ENCODE measurements at regions of chr21 and their contacts with region 1.

Region 1: GRCh38 chr21:31580866-31581276 is 78.6 kb upstream of the SOD1 start:
- DNase-seq: peak; percentile 80
- H3K4me3 Mint-ChIP-seq: no peak overlapping the region
- H3K27ac Mint-ChIP-seq: no peak overlapping the region
- H3K4me1 Mint-ChIP-seq: no peaks in the 10 kb centered on the region
- H3K27me3 Mint-ChIP-seq: peaks cover 25% of the 10 kb centered on the region
- CTCF ChIP-seq: peak; percentile 95

Region 2: DNA sequence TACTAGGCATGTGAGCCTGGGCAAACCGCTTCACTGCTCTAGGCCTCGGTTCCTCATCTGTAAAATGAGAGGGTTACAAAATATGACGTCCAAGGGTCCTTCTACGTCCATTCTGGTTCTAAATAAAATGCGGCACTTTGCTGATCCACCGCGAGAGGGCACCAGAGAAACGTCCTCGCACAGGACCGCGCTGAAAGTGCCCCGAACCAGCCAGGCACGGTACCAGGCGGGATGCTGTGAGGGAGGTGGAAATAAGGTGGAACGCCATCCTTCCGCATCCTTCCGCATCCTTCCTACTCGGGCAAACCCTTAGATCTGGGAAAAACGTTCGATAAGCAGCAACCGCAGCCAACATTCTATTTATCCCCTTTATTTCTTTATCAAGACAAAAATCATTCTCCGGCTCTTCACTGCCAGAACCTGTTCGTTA is 482.3 kb before region 1 on chr21:
- CTCF ChIA-PET with region 1: interaction called, 12 read pairs
- POLR2A ChIA-PET with region 1: no interaction called
- intact Hi-C with region 1: loop called (anchors 5 kb)
- DNase-seq: peak; percentile 55
- H3K4me3 Mint-ChIP-seq: no peak overlapping the region
- H3K27ac Mint-ChIP-seq: no peak overlapping the region
- H3K4me1 Mint-ChIP-seq: no peaks in the 10 kb centered on the region
- H3K27me3 Mint-ChIP-seq: peaks cover 16% of the 10 kb centered on the region
- CTCF ChIP-seq: peak; percentile 82

Region 3: GRCh38 chr21:31185663-31186062 is 395.2 kb before region 1 on chr21:
- CTCF ChIA-PET with region 1: interaction called, 212 read pairs
- POLR2A ChIA-PET with region 1: no interaction called
- intact Hi-C with region 1: no loop called
- DNase-seq: no peak
- H3K4me3 Mint-ChIP-seq: no peak overlapping the region
- H3K27ac Mint-ChIP-seq: no peak overlapping the region
- H3K4me1 Mint-ChIP-seq: no peaks in the 10 kb centered on the region
- H3K27me3 Mint-ChIP-seq: no peaks in the 10 kb centered on the region
- CTCF ChIP-seq: no peak

Region 4: GRCh38 chr21:31218830-31219608 is 361.9 kb before region 1 on chr21:
- CTCF ChIA-PET with region 1: interaction called, 31 read pairs
- POLR2A ChIA-PET with region 1: interaction called, 3 read pairs
- intact Hi-C with region 1: loop called (anchors 1 kb)
- DNase-seq: peak; percentile 94
- H3K4me3 Mint-ChIP-seq: peak overlapping the region; percentile 51
- H3K27ac Mint-ChIP-seq: peak overlapping the region; percentile 74
- H3K4me1 Mint-ChIP-seq: peaks cover 22% of the 10 kb centered on the region
- H3K27me3 Mint-ChIP-seq: no peaks in the 10 kb centered on the region
- CTCF ChIP-seq: no peak

Region 5: DNA sequence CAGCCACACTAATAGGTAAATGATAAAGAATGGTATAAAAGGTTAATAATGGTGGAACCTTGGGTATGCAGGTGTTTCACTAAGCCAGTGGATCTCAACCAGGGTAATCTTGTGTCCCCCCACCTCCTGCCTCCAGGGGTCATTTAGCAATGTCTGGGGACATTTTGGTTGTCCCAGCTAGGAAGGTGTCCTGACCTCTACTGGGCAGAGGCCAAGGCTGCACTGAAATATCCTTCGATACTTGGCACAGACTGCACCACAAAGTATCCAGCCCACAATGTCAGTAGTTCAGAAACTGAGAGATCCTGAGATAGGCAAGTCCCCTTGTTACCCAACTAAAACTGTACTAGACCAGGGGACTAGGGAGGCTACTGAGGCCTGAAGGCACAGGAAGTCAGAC is 123.2 kb before region 1 on chr21:
- CTCF ChIA-PET with region 1: interaction called, 6 read pairs
- POLR2A ChIA-PET with region 1: no interaction called
- intact Hi-C with region 1: loop called (anchors 2 kb)
- DNase-seq: peak; percentile 25
- H3K4me3 Mint-ChIP-seq: no peak overlapping the region
- H3K27ac Mint-ChIP-seq: no peak overlapping the region
- H3K4me1 Mint-ChIP-seq: no peaks in the 10 kb centered on the region
- H3K27me3 Mint-ChIP-seq: no peaks in the 10 kb centered on the region
- CTCF ChIP-seq: peak; percentile 15

Region 6: GRCh38 chr21:31564439-31564838 is 16.4 kb before region 1 on chr21:
- CTCF ChIA-PET with region 1: interaction called, 24 read pairs
- POLR2A ChIA-PET with region 1: no interaction called
- intact Hi-C with region 1: no loop called
- DNase-seq: no peak
- H3K4me3 Mint-ChIP-seq: no peak overlapping the region
- H3K27ac Mint-ChIP-seq: no peak overlapping the region
- H3K4me1 Mint-ChIP-seq: peaks cover 2% of the 10 kb centered on the region
- H3K27me3 Mint-ChIP-seq: no peaks in the 10 kb centered on the region
- CTCF ChIP-seq: no peak

Measured in MCF 10A (cell line).